Esophagus squamous epithelium (tissue), 5 donors: ENCODE measurements at regions of chr12 and their contacts with region 1.

Region 1: DNA sequence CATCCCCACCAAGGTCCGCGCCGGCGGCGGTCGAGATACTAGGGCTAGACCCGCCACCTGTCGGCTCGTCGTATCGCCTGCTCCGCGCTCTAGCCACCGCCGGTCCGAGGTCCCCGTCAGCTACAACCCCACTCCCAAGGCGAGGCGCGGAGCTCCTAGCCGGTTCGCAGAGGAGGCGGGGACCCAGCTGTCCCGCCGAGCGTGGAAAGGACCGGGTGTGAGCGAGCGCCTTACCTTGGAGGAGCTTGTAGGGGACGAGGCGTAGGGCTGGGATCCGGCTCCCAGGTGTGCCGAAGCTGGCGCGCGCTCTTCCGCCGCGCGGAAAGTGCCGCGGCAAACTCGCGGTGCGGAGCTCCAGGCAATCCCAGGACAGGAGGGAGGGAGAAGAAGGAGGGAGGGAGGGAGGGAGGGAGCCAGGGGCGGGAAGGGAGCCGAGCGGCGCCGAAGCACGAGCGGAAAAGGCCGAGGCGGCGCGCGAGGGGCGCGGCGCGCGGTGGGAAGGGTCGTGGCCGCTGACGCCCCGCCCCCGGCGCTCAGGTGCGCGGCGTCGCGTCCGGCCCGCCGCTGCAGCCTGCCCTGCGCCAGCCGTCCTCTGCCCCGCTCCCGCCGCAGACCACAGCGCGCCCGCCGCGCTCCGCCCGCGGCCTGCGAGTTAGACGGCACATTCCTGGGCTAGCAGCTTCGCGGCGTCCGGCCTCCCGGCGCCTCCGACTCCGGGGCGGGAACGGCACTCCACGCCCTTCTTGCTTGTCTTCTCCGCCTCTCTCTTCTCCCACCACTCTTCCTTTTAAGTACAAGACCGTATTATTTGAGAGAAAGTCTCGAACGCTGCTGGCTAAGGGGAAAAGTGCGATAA is at the start of gene PAWR:
- DNase-seq: no peak
- H3K4me3 ChIP-seq: peak within 1 kb of the TSS; percentile 76 to 96 (median 93)
- H3K27ac ChIP-seq: peak within 1 kb of the TSS; percentile 95 to 97 (median 96)
- H3K4me1 ChIP-seq: peaks cover 5 to 65% (median 6%) of the 10 kb centered on the region in 3 donors
- H3K27me3 ChIP-seq: peaks cover 0 to 17% (median 0%) of the 10 kb centered on the region in 4 donors
- CTCF ChIP-seq: peak in 2 of 6 experiments; percentile 13 to 33
- POLR2A ChIP-seq: peak in 3 of 4 donors; percentile 19 to 43 (median 27)
- total RNA-seq, gene PAWR: 44.3 to 67.3 (median 48.5) TPM

Region 2: GRCh38 chr12:79420146-79420618 is 270.7 kb before region 1 on chr12:
- intact Hi-C with region 1: loop called (anchors 2 kb)
- DNase-seq: no peak
- H3K4me3 ChIP-seq: no peak overlapping the region
- H3K27ac ChIP-seq: peak overlapping the region in 1 of 4 donors; percentile 38
- H3K4me1 ChIP-seq: peaks cover 0 to 71% (median 18%) of the 10 kb centered on the region in 3 donors
- H3K27me3 ChIP-seq: no peaks in the 10 kb centered on the region
- CTCF ChIP-seq: peak; percentile 9 to 76 (median 50)
- POLR2A ChIP-seq: no peak

Region 3: GRCh38 chr12:79555028-79555930 is 135.6 kb before region 1 on chr12:
- intact Hi-C with region 1: loop called (anchors 10 kb)
- DNase-seq: no peak
- H3K4me3 ChIP-seq: no peak overlapping the region
- H3K27ac ChIP-seq: no peak overlapping the region
- H3K4me1 ChIP-seq: peaks cover 0 to 41% (median 5%) of the 10 kb centered on the region in 3 donors
- H3K27me3 ChIP-seq: no peaks in the 10 kb centered on the region
- CTCF ChIP-seq: peak in 5 of 6 experiments; percentile 29 to 65 (median 45)
- POLR2A ChIP-seq: no peak

Region 4: DNA sequence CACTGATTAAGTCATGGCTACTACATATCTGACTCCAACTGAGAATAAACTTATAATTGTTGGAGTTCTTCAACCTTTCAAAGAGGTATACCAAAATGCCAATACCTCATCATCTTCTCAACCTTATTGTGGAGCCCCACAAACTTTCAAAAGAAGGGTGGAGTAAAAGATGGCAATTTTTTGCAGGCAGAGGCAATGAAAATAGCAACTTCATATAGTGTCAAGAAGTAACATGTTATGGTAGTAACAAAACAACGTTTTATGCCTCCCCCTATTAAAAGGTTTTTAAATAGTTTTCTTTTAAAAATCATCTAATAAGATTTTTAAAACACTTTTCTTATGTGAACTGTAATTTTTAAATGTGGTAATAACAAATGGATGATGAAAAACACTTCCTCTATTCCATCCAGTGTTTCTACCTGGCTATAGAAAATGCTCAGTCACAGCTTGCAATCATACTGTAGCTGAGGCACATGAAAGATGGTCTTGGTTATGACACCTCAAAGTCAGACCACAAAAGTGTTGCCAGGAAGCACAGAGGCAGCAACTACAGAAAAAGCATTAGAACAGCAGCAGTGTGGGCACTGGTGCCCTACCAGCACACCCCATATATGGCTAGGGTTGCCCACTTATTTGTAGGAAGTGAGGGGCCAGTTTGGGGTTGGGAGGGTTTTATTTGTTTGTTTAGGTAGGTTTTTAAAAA is 237.1 kb after region 1 on chr12:
- intact Hi-C with region 1: no loop called
- DNase-seq: no peak
- H3K4me3 ChIP-seq: peak overlapping the region in 1 of 4 donors; percentile 9
- H3K27ac ChIP-seq: peak overlapping the region in 1 of 4 donors; percentile 27
- H3K4me1 ChIP-seq: peaks cover 0 to 70% (median 10%) of the 10 kb centered on the region in 3 donors
- H3K27me3 ChIP-seq: no peaks in the 10 kb centered on the region
- CTCF ChIP-seq: no peak
- POLR2A ChIP-seq: no peak

Region 5: GRCh38 chr12:79961372-79961771 is 270.5 kb after region 1 on chr12:
- intact Hi-C with region 1: no loop called
- DNase-seq: no peak
- H3K4me3 ChIP-seq: no peak overlapping the region
- H3K27ac ChIP-seq: no peak overlapping the region
- H3K4me1 ChIP-seq: no peaks in the 10 kb centered on the region
- H3K27me3 ChIP-seq: no peaks in the 10 kb centered on the region
- CTCF ChIP-seq: no peak
- POLR2A ChIP-seq: no peak